Right cardiac atrium (tissue), 5 donors: ENCODE measurements at regions of chr16 and their contacts with region 1.

Region 1: GRCh38 chr16:22001591-22001990 is 675 bp upstream of the PDZD9 start:
- DNase-seq: no peak
- ATAC-seq: no peak
- H3K4me3 ChIP-seq: no peak overlapping the region
- H3K27ac ChIP-seq: no peak overlapping the region
- H3K4me1 ChIP-seq: peaks cover 3% of the 10 kb centered on the region
- H3K27me3 ChIP-seq: no peaks in the 10 kb centered on the region

Region 2: GRCh38 chr16:21952793-21953540 is 48.6 kb before region 1 on chr16 and contains the start of gene UQCRC2:
- intact Hi-C with region 1: no loop called
- DNase-seq: peak; percentile 89 to 94 (median 93)
- ATAC-seq: peak; percentile 97
- H3K4me3 ChIP-seq: peak within 1 kb of the TSS; percentile 99
- H3K27ac ChIP-seq: peak within 1 kb of the TSS; percentile 97
- H3K4me1 ChIP-seq: peaks cover 4% of the 10 kb centered on the region
- H3K27me3 ChIP-seq: no peaks in the 10 kb centered on the region
- total RNA-seq, gene UQCRC2: 516 to 665 (median 637) TPM

Region 3: DNA sequence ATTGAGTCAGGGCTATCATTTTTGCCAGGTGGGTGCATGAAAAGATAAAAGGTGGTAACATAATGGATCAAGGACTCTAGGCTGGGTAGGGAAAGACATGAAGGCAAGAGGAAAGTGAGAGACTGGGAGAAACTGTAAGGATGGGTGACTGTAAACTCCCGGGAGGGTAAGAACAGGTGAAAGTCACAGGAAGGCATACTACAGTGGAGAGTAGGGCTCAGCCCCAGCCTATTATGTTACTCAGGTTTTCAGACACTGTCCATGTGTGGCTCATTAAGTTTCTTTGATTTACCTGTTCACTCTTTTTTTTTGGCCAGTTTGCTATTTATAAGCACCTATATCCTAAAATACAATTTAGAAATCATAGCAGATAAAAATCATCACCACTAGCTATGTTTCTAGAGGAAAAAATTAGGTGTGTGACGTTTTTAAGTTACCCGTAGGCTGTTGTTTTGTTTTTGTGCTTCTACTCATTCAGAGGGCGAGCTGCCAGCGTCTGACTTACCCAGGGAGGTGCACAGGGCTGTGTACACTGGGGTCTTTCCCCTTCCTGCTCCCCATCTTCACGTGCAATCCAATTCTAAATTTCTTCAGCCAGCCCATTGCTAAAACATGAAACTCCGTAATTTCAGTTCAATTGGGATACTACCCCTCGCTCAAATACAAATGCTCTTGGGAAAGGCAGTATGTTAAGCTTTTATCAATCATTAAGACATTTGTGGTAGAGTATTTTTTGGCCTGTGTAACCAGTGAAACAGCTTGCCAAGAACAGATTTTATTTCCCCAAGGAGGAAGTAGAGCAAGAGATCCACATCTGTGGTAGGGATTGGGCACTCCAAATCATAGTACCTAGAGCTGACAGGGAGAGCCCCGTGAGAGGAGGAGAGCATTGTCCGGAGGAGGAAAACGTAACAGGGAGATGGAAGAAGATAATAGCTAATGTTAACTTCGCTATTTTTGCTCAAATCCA is 69.1 kb after region 1 on chr16:
- intact Hi-C with region 1: loop called in 3 of 4 experiments (anchors 5 kb)
- DNase-seq: peak; percentile 33 to 83 (median 62)
- ATAC-seq: peak; percentile 64 to 76
- H3K4me3 ChIP-seq: no peak overlapping the region
- H3K27ac ChIP-seq: no peak overlapping the region
- H3K4me1 ChIP-seq: no peaks in the 10 kb centered on the region
- H3K27me3 ChIP-seq: no peaks in the 10 kb centered on the region

Region 4: GRCh38 chr16:22077700-22078313 is 76.2 kb after region 1 on chr16:
- intact Hi-C with region 1: loop called (anchors 2 to 5 kb)
- DNase-seq: peak; percentile 47 to 85 (median 66)
- ATAC-seq: peak; percentile 63 to 66
- H3K4me3 ChIP-seq: no peak overlapping the region
- H3K27ac ChIP-seq: no peak overlapping the region
- H3K4me1 ChIP-seq: no peaks in the 10 kb centered on the region
- H3K27me3 ChIP-seq: no peaks in the 10 kb centered on the region

Region 5: GRCh38 chr16:22098405-22099255 is 97.0 kb after region 1 on chr16:
- intact Hi-C with region 1: loop called in 1 of 4 experiments (anchors 5 kb)
- DNase-seq: no peak
- ATAC-seq: peak; percentile 55 to 56
- H3K4me3 ChIP-seq: no peak overlapping the region
- H3K27ac ChIP-seq: no peak overlapping the region
- H3K4me1 ChIP-seq: no peaks in the 10 kb centered on the region
- H3K27me3 ChIP-seq: no peaks in the 10 kb centered on the region

Region 6: DNA sequence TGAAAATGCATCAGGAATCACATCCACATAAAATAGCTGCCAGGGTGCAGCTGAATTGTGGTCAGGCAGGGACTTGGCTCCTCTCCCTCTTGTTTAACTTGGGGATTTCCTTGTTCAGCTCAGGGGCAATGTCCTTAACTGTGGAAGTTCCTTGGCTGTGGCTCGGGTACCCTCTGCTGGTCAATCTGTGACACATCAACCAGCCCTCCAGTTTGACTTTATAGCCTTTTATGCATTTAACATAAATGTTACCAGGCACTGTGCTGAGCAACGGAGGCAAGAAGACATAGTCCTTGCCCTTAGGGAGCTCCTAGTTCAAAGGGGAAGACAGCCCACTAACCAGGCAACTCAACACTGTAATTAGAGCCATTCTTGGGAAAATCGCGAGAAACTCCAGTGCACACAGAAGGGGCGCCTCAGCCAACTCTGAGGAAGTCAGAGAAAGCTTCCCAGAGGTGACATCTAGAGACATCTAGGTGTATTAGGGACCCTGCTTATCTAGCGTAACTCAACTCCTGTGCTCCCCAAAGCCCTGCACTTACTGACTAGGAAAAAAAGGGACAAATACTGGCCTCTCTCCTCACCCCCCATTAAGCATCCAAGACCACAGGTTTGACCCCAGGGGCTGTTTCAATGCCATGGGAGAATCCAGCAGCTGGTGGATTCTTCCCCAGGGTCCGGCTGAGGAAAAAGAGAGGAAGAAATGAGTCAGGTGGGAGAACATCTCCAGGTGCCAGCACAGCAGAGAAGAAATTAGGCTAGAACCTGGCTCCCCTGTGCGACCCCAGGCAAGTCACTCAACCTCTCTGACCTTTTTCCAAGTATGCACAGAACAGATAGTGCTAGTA is 187.2 kb after region 1 on chr16:
- intact Hi-C with region 1: loop called (anchors 5 kb)
- DNase-seq: peak; percentile 63 to 75 (median 63)
- ATAC-seq: no peak
- H3K4me3 ChIP-seq: no peak overlapping the region
- H3K27ac ChIP-seq: peak overlapping the region; percentile 63
- H3K4me1 ChIP-seq: peaks cover 6% of the 10 kb centered on the region
- H3K27me3 ChIP-seq: no peaks in the 10 kb centered on the region